ENCODE measurements at regions of chr13 and their contacts with region 1.

Region 1: DNA sequence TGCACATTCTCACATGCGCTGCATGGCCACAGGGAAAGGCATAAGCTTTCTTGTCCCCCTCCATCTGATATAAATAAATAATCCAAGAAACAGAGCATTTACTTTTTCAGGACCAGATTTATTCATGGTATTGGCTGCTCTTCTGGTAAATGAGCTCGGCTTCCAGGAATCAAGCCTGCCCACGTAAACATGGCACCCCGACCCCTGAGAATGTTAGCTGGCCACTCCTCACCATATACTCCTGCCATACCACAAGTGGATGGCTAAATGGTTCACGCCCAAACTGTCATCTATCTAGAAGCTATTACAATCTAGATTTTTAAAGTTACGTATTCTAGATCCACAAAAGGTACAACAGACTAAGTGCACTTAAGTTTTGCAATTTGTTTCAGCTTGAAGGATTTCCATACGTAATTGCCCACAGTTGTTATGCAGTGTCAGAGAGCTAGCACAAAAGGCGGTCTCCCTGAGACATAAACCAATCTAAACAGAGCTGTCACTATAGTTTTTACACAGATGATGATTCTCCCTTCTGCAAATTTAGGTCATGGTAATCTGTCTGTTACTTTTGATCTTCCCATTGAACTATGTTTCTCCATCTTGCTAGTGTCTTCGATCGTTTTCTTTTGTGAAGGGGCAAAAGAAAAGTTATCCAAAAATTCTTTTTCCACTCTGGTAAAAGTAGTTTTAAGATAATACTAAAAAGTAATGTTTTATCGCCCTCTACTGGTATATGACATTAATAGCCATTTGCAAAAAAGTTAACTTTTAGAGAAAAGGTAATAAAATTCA is 16.2 kb upstream of the FOXO1 start:
- DNase-seq: peak; percentile 64
- ATAC-seq: no peak
- H3K4me3 ChIP-seq: no peak overlapping the region
- H3K27ac ChIP-seq: no peak overlapping the region
- H3K4me1 ChIP-seq: no peaks in the 10 kb centered on the region
- H3K27me3 ChIP-seq: no peaks in the 10 kb centered on the region
- CTCF ChIP-seq: peak; percentile 64

Region 2: GRCh38 chr13:39684531-39685137 is 998.0 kb before region 1 on chr13:
- CTCF ChIA-PET with region 1: no interaction called
- POLR2A ChIA-PET with region 1: no interaction called
- intact Hi-C with region 1: loop called (anchors 5 kb)
- DNase-seq: peak; percentile 54
- ATAC-seq: no peak
- H3K4me3 ChIP-seq: no peak overlapping the region
- H3K27ac ChIP-seq: no peak overlapping the region
- H3K4me1 ChIP-seq: no peaks in the 10 kb centered on the region
- H3K27me3 ChIP-seq: no peaks in the 10 kb centered on the region
- CTCF ChIP-seq: peak; percentile 55

Region 3: DNA sequence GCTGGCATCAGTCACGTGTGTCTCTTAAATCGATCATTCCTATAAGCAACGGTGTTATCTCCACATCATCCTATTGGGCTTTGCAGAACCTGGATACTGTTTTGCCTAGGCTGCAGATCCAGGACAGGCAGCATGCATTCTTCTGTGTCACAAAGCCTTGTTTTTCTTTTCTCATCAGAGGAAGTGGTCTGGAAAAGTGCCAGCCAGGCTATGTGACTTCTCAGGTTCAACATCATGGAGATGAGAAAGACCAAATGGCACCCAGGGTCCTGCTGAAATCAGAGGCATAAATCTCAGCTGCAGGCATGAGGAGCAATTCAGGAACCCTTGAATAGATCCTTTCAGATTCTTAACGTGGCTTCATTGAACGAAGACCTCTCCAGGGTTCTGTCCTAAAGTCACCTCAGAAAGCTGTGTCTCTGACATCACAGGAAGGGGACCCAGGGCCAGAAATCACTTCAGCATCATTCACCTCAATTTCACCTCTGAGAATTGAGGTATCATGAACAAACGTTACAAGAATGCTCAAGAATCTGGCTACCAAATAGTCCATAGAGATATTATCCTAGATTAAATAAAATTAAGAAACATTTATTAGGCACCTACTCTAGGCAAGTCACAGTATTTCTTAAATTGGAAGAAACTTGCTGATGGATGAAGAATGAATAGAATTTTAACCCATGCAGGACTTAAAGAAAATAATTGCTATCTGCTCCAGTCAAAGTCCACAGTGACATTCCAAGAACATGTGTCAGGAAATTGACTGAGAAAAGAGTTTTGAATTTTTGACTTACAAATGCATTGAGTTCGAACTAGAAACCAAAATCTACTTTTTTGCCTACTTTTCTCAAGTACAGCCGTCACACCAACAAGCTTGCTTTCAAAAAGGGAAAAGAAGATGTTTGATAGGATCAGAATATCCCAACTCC is 903.0 kb before region 1 on chr13:
- CTCF ChIA-PET with region 1: no interaction called
- POLR2A ChIA-PET with region 1: no interaction called
- intact Hi-C with region 1: loop called (anchors 5 kb)
- DNase-seq: peak; percentile 39
- ATAC-seq: no peak
- H3K4me3 ChIP-seq: no peak overlapping the region
- H3K27ac ChIP-seq: no peak overlapping the region
- H3K4me1 ChIP-seq: peaks cover 26% of the 10 kb centered on the region
- H3K27me3 ChIP-seq: no peaks in the 10 kb centered on the region
- CTCF ChIP-seq: no peak

Region 4: GRCh38 chr13:39942552-39943273 is 739.9 kb before region 1 on chr13:
- CTCF ChIA-PET with region 1: interaction called, 6 read pairs
- POLR2A ChIA-PET with region 1: no interaction called
- intact Hi-C with region 1: loop called (anchors 1 kb)
- DNase-seq: peak; percentile 85
- ATAC-seq: peak; percentile 99
- H3K4me3 ChIP-seq: no peak overlapping the region
- H3K27ac ChIP-seq: no peak overlapping the region
- H3K4me1 ChIP-seq: no peaks in the 10 kb centered on the region
- H3K27me3 ChIP-seq: no peaks in the 10 kb centered on the region
- CTCF ChIP-seq: peak; percentile 97

Region 5: GRCh38 chr13:40069173-40070044 is 613.2 kb before region 1 on chr13:
- CTCF ChIA-PET with region 1: no interaction called
- POLR2A ChIA-PET with region 1: interaction called, 14 read pairs
- intact Hi-C with region 1: loop called (anchors 2 kb)
- DNase-seq: peak; percentile 61
- ATAC-seq: 0 out of 2 replicates have a peak, but pooled peaks have one; percentile 29
- H3K4me3 ChIP-seq: no peak overlapping the region
- H3K27ac ChIP-seq: no peak overlapping the region
- H3K4me1 ChIP-seq: peaks cover 8% of the 10 kb centered on the region
- H3K27me3 ChIP-seq: no peaks in the 10 kb centered on the region
- CTCF ChIP-seq: peak; percentile 75

Region 6: GRCh38 chr13:40639221-40639681 is 43.4 kb before region 1 on chr13:
- CTCF ChIA-PET with region 1: no interaction called
- POLR2A ChIA-PET with region 1: no interaction called
- intact Hi-C with region 1: no loop called
- DNase-seq: no peak
- ATAC-seq: no peak
- H3K4me3 ChIP-seq: no peak overlapping the region
- H3K27ac ChIP-seq: no peak overlapping the region
- H3K4me1 ChIP-seq: 0 out of 2 replicates have a peak, but pooled peaks cover 3% of the 10 kb centered on the region
- H3K27me3 ChIP-seq: no peaks in the 10 kb centered on the region
- CTCF ChIP-seq: no peak

Measured in PC-3 (cell line).